CD4-positive, alpha-beta memory T cell (primary cell): ENCODE measurements at regions of chr4 and their contacts with region 1.

Region 1: DNA sequence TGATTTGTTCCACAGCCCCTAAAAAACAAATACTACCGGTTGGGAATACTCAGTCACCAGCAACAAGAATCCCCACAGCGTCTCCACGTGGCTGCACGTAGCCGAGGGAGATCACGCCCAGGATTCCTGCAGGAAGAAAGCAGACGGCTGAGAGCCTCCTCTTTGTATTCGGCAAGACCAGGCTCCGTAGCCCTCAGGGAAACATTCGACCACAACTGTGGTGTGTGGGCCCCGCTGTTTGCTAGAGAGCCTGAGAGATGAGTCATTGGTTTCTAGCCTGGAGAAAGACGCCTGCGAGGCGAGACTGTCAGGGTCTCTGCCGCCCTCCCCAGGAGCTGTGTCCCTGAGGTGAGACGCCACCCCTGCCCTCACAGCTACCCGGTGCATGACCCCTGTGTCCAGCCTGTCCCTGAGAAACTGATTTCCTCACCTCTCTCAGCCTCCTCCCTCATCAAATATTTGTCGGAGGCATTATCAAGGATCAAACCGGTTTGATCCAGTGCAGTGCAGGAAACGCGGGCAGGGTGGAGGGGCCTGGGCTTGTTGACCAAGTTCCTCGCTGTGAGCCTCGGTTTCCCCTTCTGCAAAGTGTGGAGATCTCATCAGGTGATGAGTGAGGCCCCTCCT is 4.7 kb upstream of the S100P start:
- DNase-seq: peak; percentile 60 to 92 (median 64)
- H3K4me3 ChIP-seq: peak overlapping the region; percentile 18 to 55
- H3K4me3 Mint-ChIP-seq: peak overlapping the region; percentile 87 to 97 (median 93)
- H3K27ac ChIP-seq: peak overlapping the region; percentile 62
- H3K27ac Mint-ChIP-seq: peak overlapping the region; percentile 89 to 99 (median 97)
- H3K4me1 ChIP-seq: peaks cover 73% of the 10 kb centered on the region
- H3K4me1 Mint-ChIP-seq: peaks cover 55 to 88% (median 72%) of the 10 kb centered on the region in 4 donors
- H3K27me3 ChIP-seq: no peaks in the 10 kb centered on the region
- H3K27me3 Mint-ChIP-seq: no peaks in the 10 kb centered on the region

Region 2: GRCh38 chr4:6701371-6701770 is 12.4 kb after region 1 on chr4:
- CTCF ChIA-PET with region 1: interaction called, 64 read pairs
- POLR2A ChIA-PET with region 1: interaction called, 1,401 read pairs
- intact Hi-C with region 1: no loop called
- DNase-seq: peak in 3 of 5 donors; percentile 36 to 47 (median 40)
- H3K4me3 ChIP-seq: no peak overlapping the region
- H3K4me3 Mint-ChIP-seq: no peak overlapping the region
- H3K27ac ChIP-seq: no peak overlapping the region
- H3K27ac Mint-ChIP-seq: peak overlapping the region in 4 of 7 donors; percentile 19 to 84 (median 44)
- H3K4me1 ChIP-seq: peaks cover 73% of the 10 kb centered on the region
- H3K4me1 Mint-ChIP-seq: peaks cover 56 to 80% (median 69%) of the 10 kb centered on the region in 4 donors
- H3K27me3 ChIP-seq: no peaks in the 10 kb centered on the region
- H3K27me3 Mint-ChIP-seq: no peaks in the 10 kb centered on the region